ENCODE measurements at regions of chr4 and their contacts with region 1.

Region 1: GRCh38 chr4:68904786-68905185 is 46.8 kb downstream of the UGT2A3 start:
- DNase-seq: peak; percentile 21
- ATAC-seq: peak; percentile 83
- H3K4me3 ChIP-seq: no peak overlapping the region
- H3K27ac ChIP-seq: no peak overlapping the region
- H3K4me1 ChIP-seq: no peaks in the 10 kb centered on the region
- H3K27me3 ChIP-seq: no peaks in the 10 kb centered on the region
- CTCF ChIP-seq: peak; percentile 26 to 36 (median 35); a peak in 3 of 6 replicates
- EP300 ChIP-seq: no peak
- POLR2A ChIP-seq: no peak
- RAD21 ChIP-seq: peak; percentile 48

Region 2: DNA sequence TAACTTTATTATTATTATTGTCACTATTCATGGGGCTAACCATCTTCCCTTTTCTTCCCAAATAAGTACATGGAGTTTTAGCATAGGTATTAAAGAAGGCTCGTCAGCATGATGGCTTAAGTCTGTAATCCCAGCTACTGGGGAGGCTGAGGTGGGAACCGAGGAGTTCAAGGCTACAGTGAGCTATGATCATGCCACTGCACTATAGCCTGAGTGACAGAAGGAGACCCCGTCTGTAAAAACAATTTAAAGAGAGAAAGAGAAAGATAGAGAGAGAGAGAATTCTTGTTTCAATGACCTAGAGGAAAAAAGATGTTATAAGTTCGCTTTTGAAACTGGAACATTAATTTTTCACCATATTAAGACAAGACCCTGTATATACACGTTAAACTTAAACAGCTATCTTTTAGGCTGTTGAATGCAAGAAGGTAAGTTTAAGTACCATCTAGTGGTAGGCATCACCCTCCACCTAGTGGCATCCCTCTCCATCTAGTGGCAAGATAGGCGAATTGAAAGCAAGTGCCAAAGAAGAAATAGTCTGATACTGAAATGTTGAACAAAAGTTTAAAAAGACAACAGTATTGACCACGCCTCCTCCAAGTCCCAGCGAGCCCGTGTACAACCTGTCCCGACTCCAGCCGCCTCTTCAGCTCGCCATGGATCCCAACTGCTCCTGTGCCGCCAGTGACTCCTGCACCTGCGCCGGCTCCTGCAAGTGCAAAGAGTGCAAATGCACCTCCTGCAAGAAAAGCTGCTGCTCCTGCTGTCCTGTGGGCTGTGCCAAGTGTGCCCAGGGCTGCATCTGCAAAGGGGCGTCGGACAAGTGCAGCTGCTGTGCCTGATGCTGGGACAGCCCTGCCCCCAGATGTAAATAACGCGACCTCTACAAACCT is 528.9 kb before region 1 on chr4:
- CTCF ChIA-PET with region 1: no interaction called
- POLR2A ChIA-PET with region 1: no interaction called
- RAD21 ChIA-PET with region 1: no interaction called
- SMC1A ChIA-PET with region 1: no interaction called
- in situ Hi-C with region 1: no loop called
- intact Hi-C with region 1: no loop called
- DNase-seq: no peak
- ATAC-seq: peak; percentile 91
- H3K4me3 ChIP-seq: no peak overlapping the region
- H3K27ac ChIP-seq: no peak overlapping the region
- H3K4me1 ChIP-seq: no peaks in the 10 kb centered on the region
- H3K27me3 ChIP-seq: no peaks in the 10 kb centered on the region; a peak in 1 of 4 replicates
- CTCF ChIP-seq: peak; percentile 78 to 97 (median 84)
- EP300 ChIP-seq: no peak
- POLR2A ChIP-seq: no peak
- RAD21 ChIP-seq: peak; percentile 87

Region 3: GRCh38 chr4:68498413-68499007 is 406.3 kb before region 1 on chr4:
- CTCF ChIA-PET with region 1: interaction called, 20 read pairs
- POLR2A ChIA-PET with region 1: no interaction called
- RAD21 ChIA-PET with region 1: interaction called, 8 read pairs
- SMC1A ChIA-PET with region 1: interaction called, 20 read pairs
- in situ Hi-C with region 1: no loop called
- intact Hi-C with region 1: loop called (anchors 10 kb)
- DNase-seq: peak; percentile 30
- ATAC-seq: peak; percentile 97
- H3K4me3 ChIP-seq: no peak overlapping the region
- H3K27ac ChIP-seq: no peak overlapping the region
- H3K4me1 ChIP-seq: 0 out of 2 replicates have a peak, but pooled peaks cover 3% of the 10 kb centered on the region
- H3K27me3 ChIP-seq: no peaks in the 10 kb centered on the region
- CTCF ChIP-seq: peak; percentile 74 to 93 (median 86)
- EP300 ChIP-seq: no peak
- POLR2A ChIP-seq: no peak
- RAD21 ChIP-seq: peak; percentile 100

Region 4: DNA sequence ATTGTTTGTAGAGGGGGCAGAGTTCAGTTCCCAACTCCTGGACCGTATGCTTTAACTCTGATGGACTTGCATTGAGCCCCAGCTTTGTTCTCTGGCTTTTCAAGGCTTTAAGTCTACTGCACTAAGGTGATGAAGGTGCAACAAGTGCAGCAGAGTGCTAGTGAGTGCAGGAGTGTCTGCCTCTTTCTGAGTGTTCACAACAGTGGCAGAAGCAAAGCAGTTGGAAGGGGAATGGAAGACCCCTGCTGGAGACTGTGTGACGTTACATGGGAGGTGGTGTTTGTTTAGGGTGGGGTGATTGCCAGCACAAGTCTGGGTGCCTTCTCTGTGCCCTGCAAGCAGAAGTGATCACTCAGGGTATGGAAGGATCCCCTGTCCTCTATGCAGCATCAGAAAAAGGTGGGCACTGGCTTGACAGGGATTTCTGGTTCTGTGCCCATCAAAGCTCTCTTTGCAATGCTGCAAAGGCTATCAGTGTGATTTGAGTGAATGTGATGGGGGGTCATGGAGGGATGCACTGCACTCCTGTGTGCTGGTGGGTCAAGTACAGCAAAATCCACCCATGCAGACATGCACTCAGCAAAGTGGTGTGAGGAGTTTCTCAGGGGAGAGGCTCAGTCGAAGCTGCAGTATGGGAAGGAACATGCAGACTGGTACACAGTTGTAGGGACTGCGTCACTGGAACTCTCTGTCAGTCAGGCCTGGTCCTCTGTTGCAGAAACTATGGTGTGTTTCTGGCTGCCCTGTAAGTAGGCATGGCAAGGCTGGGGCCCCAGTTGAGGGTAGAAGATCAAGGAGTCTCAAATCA is 120.6 kb after region 1 on chr4:
- CTCF ChIA-PET with region 1: interaction called, 42 read pairs
- POLR2A ChIA-PET with region 1: interaction called, 3 read pairs
- RAD21 ChIA-PET with region 1: interaction called, 16 read pairs
- SMC1A ChIA-PET with region 1: interaction called, 35 read pairs
- in situ Hi-C with region 1: no loop called
- intact Hi-C with region 1: loop called (anchors 1 kb)
- DNase-seq: no peak
- ATAC-seq: peak; percentile 92
- H3K4me3 ChIP-seq: no peak overlapping the region
- H3K27ac ChIP-seq: no peak overlapping the region
- H3K4me1 ChIP-seq: no peaks in the 10 kb centered on the region
- H3K27me3 ChIP-seq: no peaks in the 10 kb centered on the region
- CTCF ChIP-seq: peak; percentile 19 to 54 (median 30); a peak in 4 of 6 replicates
- EP300 ChIP-seq: no peak
- POLR2A ChIP-seq: no peak
- RAD21 ChIP-seq: peak; percentile 57

Region 5: DNA sequence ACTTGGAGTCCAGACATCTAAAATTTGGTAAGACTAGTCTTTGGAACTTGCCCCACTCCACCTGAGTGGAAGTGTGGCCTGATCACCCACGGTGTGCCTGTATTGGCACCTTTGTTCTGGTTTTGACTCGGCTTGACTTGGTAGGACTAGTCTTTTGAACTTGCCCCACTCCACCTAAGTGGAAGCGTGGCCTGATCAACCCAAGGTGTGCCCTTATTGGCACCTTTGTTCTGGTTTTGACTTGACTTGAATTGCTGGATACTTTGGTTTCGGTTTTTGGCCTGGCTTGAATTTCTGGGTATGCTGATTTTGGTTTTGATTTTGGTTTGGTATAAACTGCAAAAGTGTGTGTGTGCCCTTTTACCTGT is 146.8 kb after region 1 on chr4:
- CTCF ChIA-PET with region 1: interaction called, 15 read pairs
- POLR2A ChIA-PET with region 1: interaction called, 7 read pairs
- RAD21 ChIA-PET with region 1: interaction called, 29 read pairs
- SMC1A ChIA-PET with region 1: interaction called, 40 read pairs
- in situ Hi-C with region 1: no loop called
- intact Hi-C with region 1: no loop called
- DNase-seq: no peak
- ATAC-seq: peak; percentile 23
- H3K4me3 ChIP-seq: no peak overlapping the region
- H3K27ac ChIP-seq: no peak overlapping the region
- H3K4me1 ChIP-seq: no peaks in the 10 kb centered on the region
- H3K27me3 ChIP-seq: no peaks in the 10 kb centered on the region
- CTCF ChIP-seq: no peak
- EP300 ChIP-seq: no peak
- POLR2A ChIP-seq: no peak
- RAD21 ChIP-seq: no peak

Measured in GM12878 (cell line).